ENCODE measurements at regions of chr16 and their contacts with region 1.

Region 1: DNA sequence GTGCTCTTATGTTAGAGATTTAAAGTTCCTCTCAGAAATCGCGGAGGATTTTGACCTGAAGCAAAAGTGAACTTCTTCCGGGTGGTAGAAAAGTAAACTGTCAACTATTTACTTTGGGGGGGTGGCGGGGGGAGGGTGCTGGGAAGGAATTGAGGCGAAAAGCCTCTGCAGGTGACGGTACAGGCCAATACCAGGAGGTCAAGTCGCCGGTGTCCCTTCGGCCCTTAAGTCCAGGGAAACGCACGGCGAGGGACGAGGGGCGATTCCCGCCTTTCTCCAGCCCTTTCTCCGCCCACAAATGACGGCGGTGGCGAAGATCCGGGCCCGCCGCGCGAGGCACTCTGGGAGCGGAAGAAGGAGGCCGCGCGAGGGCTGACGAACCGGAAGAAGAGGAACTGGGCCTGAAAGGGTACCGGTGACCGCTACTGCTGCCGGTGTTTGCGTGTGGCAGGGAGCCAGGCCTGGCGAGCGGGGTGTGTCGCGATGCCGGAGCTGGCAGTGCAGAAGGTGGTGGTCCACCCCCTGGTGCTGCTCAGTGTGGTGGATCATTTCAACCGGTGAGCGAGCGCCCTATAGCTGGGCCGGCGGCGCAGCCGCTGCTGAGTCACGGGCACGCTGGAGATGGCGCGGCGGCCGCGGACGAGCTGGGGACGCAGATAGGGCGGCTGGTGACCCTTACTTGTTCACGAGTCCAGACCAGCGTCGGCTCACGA is at the start of gene PSMD7:
- DNase-seq: peak; percentile 93
- H3K4me3 Mint-ChIP-seq: peak within 1 kb of the TSS; percentile 92
- H3K27ac Mint-ChIP-seq: peak within 1 kb of the TSS; percentile 93
- H3K4me1 Mint-ChIP-seq: peaks cover 32% of the 10 kb centered on the region
- H3K27me3 Mint-ChIP-seq: no peaks in the 10 kb centered on the region
- total RNA-seq, gene PSMD7: 113 to 114 TPM

Region 2: GRCh38 chr16:72664509-72665225 is 1631.9 kb before region 1 on chr16:
- CTCF ChIA-PET with region 1: no interaction called
- intact Hi-C with region 1: loop called (anchors 1 kb)
- DNase-seq: peak; percentile 98
- H3K4me3 Mint-ChIP-seq: peak overlapping the region; percentile 100
- H3K27ac Mint-ChIP-seq: peak overlapping the region; percentile 95
- H3K4me1 Mint-ChIP-seq: peaks cover 9% of the 10 kb centered on the region
- H3K27me3 Mint-ChIP-seq: no peaks in the 10 kb centered on the region

Region 3: GRCh38 chr16:74372953-74373846 is 76.6 kb after region 1 on chr16:
- CTCF ChIA-PET with region 1: no interaction called
- intact Hi-C with region 1: loop called (anchors 1 kb)
- DNase-seq: no peak
- H3K4me3 Mint-ChIP-seq: no peak overlapping the region
- H3K27ac Mint-ChIP-seq: no peak overlapping the region
- H3K4me1 Mint-ChIP-seq: peaks cover 2% of the 10 kb centered on the region
- H3K27me3 Mint-ChIP-seq: no peaks in the 10 kb centered on the region

Region 4: DNA sequence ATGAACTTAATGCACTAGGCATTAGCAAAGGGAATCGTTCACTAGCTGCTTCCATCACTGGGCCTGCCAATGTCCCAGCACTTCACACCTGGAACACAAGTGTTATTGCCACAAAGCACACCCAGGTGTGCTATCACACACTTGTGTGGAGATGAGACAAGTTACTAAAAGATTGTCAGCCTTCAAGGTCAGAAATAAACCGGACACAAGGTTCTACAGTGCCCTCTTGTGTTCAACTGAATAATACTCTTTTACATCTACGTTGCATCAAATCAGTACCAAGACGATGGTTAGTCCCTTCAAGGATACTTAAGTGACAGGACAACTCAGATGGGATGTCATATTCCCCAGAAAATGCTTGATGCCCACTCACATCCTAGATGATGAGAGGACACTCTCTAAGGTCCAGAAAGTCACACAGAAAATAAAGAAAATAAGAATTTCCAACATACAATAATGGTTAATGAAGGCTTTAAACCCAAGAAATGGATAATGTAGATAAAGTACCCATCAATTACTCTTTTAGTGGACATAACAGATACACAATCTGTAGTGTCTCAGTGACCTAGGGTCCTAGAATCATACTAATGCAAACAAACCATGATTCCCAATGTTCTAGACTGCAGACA is 326.7 kb after region 1 on chr16:
- CTCF ChIA-PET with region 1: no interaction called
- intact Hi-C with region 1: loop called (anchors 5 kb)
- DNase-seq: no peak
- H3K4me3 Mint-ChIP-seq: no peak overlapping the region
- H3K27ac Mint-ChIP-seq: peak overlapping the region; percentile 47
- H3K4me1 Mint-ChIP-seq: peaks cover 38% of the 10 kb centered on the region
- H3K27me3 Mint-ChIP-seq: no peaks in the 10 kb centered on the region

Region 5: GRCh38 chr16:74862741-74863244 is 566.2 kb after region 1 on chr16:
- CTCF ChIA-PET with region 1: no interaction called
- intact Hi-C with region 1: loop called (anchors 10 kb)
- DNase-seq: peak; percentile 42
- H3K4me3 Mint-ChIP-seq: no peak overlapping the region
- H3K27ac Mint-ChIP-seq: no peak overlapping the region
- H3K4me1 Mint-ChIP-seq: peaks cover 8% of the 10 kb centered on the region
- H3K27me3 Mint-ChIP-seq: no peaks in the 10 kb centered on the region

Measured in activated naive CD4-positive, alpha-beta T cell treated with anti-CD3 and anti-CD28 coated beads for 36 hours (primary cell).